Natural killer cell (primary cell): ENCODE measurements at regions of chr12 and their contacts with region 1.

Region 1: DNA sequence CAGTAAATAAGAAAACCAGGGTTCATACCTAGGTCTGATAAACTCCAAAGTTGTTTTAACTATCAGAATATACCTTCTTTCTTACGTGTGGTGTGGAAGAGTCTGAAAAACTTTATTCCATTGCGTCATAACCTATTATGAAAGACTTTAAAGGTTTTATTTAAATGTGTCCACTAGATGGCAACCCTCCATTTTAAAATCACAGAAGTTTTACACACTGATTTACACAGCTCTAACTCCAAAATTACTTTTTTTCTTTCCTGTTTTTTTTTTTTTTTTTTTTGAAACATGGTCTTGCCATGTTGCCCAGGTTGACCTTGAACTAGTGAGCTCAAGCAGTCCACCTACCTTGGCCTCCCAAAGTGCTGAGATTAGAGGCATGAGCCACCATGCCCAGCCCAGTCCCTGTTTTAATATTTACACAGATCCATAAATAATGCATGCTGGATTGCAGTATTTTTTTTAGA is 17.3 kb upstream of the TMPRSS12 start:
- DNase-seq: peak in 1 of 2 donors; percentile 79
- ATAC-seq: peak; percentile 74 to 91 (median 87)
- H3K4me3 ChIP-seq: no peak overlapping the region
- H3K4me3 Mint-ChIP-seq: no peak overlapping the region
- H3K27ac ChIP-seq: peak overlapping the region; percentile 32
- H3K27ac Mint-ChIP-seq: peak overlapping the region; percentile 89 to 93
- H3K4me1 ChIP-seq: no peaks in the 10 kb centered on the region
- H3K4me1 Mint-ChIP-seq: peaks cover 6% of the 10 kb centered on the region in 2 donors
- H3K27me3 ChIP-seq: no peaks in the 10 kb centered on the region
- H3K27me3 Mint-ChIP-seq: no peaks in the 10 kb centered on the region
- CTCF ChIP-seq: peak; percentile 71

Region 2: DNA sequence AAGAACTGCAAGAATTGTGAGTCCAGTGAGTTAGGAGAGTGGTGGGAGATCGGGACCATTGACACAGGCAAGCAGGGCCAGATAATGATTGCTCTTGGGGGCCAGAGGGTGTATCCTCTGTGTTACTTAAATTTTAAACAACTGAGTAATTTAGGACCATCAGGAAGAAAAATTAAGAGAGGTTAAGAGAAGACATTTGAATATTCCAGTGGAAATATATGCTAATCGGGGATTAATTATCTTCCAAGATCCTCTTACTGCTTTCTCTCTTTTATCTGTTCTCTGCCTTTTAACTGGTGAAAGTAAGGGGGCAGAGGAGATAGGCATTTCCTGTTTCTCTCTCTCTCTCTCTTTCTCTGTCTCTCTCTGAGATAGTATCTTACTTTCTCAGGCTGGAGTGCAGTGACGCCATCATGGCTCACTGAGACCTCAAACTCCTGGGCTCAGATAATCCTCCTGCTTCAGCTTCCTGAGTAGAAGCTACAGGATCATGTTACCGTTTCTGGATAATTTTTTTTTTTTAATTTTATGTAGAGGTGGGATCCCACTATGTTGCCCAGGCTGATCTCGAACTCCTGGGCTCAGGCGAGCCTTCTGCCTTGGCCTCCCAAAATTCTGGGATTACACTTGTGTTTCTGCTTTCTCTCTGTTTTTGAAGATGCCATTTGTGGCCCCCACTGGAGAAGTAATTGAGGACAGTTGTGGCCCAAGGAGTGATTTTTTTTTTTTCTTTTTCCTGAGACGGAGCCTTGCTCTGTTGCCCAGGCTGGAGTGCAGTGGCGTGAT is 235.6 kb before region 1 on chr12:
- intact Hi-C with region 1: no loop called
- DNase-seq: peak in 1 of 2 donors; percentile 40
- ATAC-seq: no peak
- H3K4me3 ChIP-seq: no peak overlapping the region
- H3K4me3 Mint-ChIP-seq: no peak overlapping the region
- H3K27ac ChIP-seq: no peak overlapping the region
- H3K27ac Mint-ChIP-seq: peak overlapping the region in 1 of 2 donors; percentile 15
- H3K4me1 ChIP-seq: peaks cover 4% of the 10 kb centered on the region
- H3K4me1 Mint-ChIP-seq: peaks cover 16 to 25% of the 10 kb centered on the region in 2 donors
- H3K27me3 ChIP-seq: no peaks in the 10 kb centered on the region
- H3K27me3 Mint-ChIP-seq: no peaks in the 10 kb centered on the region
- CTCF ChIP-seq: no peak

Region 3: GRCh38 chr12:50918584-50919316 is 93.3 kb after region 1 on chr12:
- intact Hi-C with region 1: no loop called
- DNase-seq: no peak
- ATAC-seq: no peak
- H3K4me3 ChIP-seq: no peak overlapping the region
- H3K4me3 Mint-ChIP-seq: no peak overlapping the region
- H3K27ac ChIP-seq: no peak overlapping the region
- H3K27ac Mint-ChIP-seq: no peak overlapping the region
- H3K4me1 ChIP-seq: peaks cover 18% of the 10 kb centered on the region
- H3K4me1 Mint-ChIP-seq: peaks cover 34% of the 10 kb centered on the region in 2 donors
- H3K27me3 ChIP-seq: no peaks in the 10 kb centered on the region
- H3K27me3 Mint-ChIP-seq: peaks cover 0 to 8% of the 10 kb centered on the region in 2 donors
- CTCF ChIP-seq: no peak

Region 4: GRCh38 chr12:50986966-50987737 is 161.7 kb after region 1 on chr12:
- intact Hi-C with region 1: loop called (anchors 1 kb)
- DNase-seq: peak in 1 of 2 donors; percentile 65
- ATAC-seq: peak; percentile 64 to 73 (median 69)
- H3K4me3 ChIP-seq: no peak overlapping the region
- H3K4me3 Mint-ChIP-seq: no peak overlapping the region
- H3K27ac ChIP-seq: no peak overlapping the region
- H3K27ac Mint-ChIP-seq: no peak overlapping the region
- H3K4me1 ChIP-seq: no peaks in the 10 kb centered on the region
- H3K4me1 Mint-ChIP-seq: no peaks in the 10 kb centered on the region
- H3K27me3 ChIP-seq: no peaks in the 10 kb centered on the region
- H3K27me3 Mint-ChIP-seq: no peaks in the 10 kb centered on the region
- CTCF ChIP-seq: peak; percentile 49

Region 5: GRCh38 chr12:51531978-51532497 is 706.6 kb after region 1 on chr12:
- intact Hi-C with region 1: loop called (anchors 2 kb)
- DNase-seq: peak; percentile 60 to 84
- ATAC-seq: peak; percentile 88 to 99 (median 99)
- H3K4me3 ChIP-seq: no peak overlapping the region
- H3K4me3 Mint-ChIP-seq: no peak overlapping the region
- H3K27ac ChIP-seq: no peak overlapping the region
- H3K27ac Mint-ChIP-seq: no peak overlapping the region
- H3K4me1 ChIP-seq: peaks cover 4% of the 10 kb centered on the region
- H3K4me1 Mint-ChIP-seq: peaks cover 0 to 9% of the 10 kb centered on the region in 2 donors
- H3K27me3 ChIP-seq: no peaks in the 10 kb centered on the region
- H3K27me3 Mint-ChIP-seq: peaks cover 15 to 35% of the 10 kb centered on the region in 2 donors
- CTCF ChIP-seq: peak; percentile 92